ENCODE measurements at regions of chr12 and their contacts with region 1.

Region 1: DNA sequence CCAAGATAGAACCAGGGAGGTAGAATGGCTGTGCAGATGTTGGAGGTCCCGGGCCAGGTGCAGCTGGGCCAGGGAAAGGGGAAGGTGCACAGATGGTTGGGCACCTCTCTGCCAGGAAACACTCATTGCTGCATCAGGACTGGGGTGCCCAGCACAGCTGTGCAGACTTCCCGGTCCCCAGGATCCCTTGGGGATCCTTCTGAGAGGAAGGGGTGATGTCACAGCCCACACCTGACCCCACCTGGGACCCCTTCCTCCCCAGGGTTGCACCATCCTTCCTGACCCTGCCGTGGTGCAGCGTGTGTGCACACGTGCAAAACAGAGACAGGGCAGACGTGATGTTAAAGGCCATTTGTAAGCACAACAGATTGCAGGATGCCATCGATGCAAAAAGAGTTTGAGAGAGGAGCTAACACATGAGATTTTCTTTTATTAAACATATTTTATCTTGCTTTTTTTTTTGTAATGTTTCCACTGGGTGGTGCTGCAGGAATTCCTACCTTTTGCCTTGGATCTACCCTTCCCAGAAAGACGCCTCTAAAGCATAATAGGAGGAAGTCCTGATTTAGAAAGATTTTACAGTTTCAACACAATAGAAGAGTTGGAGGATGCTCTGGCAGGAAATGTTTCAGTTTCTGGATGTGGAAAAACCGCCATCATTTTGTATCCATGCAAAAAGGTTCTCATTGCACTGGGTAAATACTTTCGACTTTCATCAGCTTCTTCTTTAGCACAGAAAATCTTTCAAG is 14.8 kb downstream of the ELK3 start:
- DNase-seq: no peak
- H3K4me3 Mint-ChIP-seq: peak overlapping the region; percentile 70
- H3K27ac Mint-ChIP-seq: peak overlapping the region; percentile 92
- H3K4me1 Mint-ChIP-seq: peaks cover 98% of the 10 kb centered on the region
- H3K27me3 Mint-ChIP-seq: no peaks in the 10 kb centered on the region

Region 2: GRCh38 chr12:96186607-96187301 is 22.2 kb before region 1 on chr12:
- CTCF ChIA-PET with region 1: interaction called, 10 read pairs
- POLR2A ChIA-PET with region 1: interaction called, 10 read pairs
- DNase-seq: no peak
- H3K4me3 Mint-ChIP-seq: no peak overlapping the region
- H3K27ac Mint-ChIP-seq: no peak overlapping the region
- H3K4me1 Mint-ChIP-seq: peaks cover 23% of the 10 kb centered on the region
- H3K27me3 Mint-ChIP-seq: no peaks in the 10 kb centered on the region

Region 3: GRCh38 chr12:96263449-96263902 is 54.5 kb after region 1 on chr12:
- CTCF ChIA-PET with region 1: no interaction called
- POLR2A ChIA-PET with region 1: no interaction called
- DNase-seq: no peak
- H3K4me3 Mint-ChIP-seq: no peak overlapping the region
- H3K27ac Mint-ChIP-seq: no peak overlapping the region
- H3K4me1 Mint-ChIP-seq: peaks cover 7% of the 10 kb centered on the region
- H3K27me3 Mint-ChIP-seq: no peaks in the 10 kb centered on the region

Region 4: GRCh38 chr12:96516472-96517430 is 307.8 kb after region 1 on chr12:
- CTCF ChIA-PET with region 1: interaction called, 14 read pairs
- POLR2A ChIA-PET with region 1: no interaction called
- DNase-seq: peak; percentile 92
- H3K4me3 Mint-ChIP-seq: peak overlapping the region; percentile 38
- H3K27ac Mint-ChIP-seq: peak overlapping the region; percentile 82
- H3K4me1 Mint-ChIP-seq: peaks cover 20% of the 10 kb centered on the region
- H3K27me3 Mint-ChIP-seq: peaks cover 2% of the 10 kb centered on the region